Calu3 (cell line): ENCODE measurements at regions of chr3 and their contacts with region 1.

Region 1: GRCh38 chr3:161586556-161587235 is 90.1 kb downstream of the OTOL1 start:
- DNase-seq: no peak
- H3K4me3 Mint-ChIP-seq: no peak overlapping the region
- H3K27ac Mint-ChIP-seq: no peak overlapping the region
- H3K4me1 Mint-ChIP-seq: no peaks in the 10 kb centered on the region
- H3K27me3 Mint-ChIP-seq: no peaks in the 10 kb centered on the region
- CTCF ChIP-seq: no peak

Region 2: GRCh38 chr3:160911411-160911810 is 675.3 kb before region 1 on chr3:
- CTCF ChIA-PET with region 1: no interaction called
- intact Hi-C with region 1: no loop called
- DNase-seq: no peak
- H3K4me3 Mint-ChIP-seq: no peak overlapping the region
- H3K27ac Mint-ChIP-seq: no peak overlapping the region
- H3K4me1 Mint-ChIP-seq: no peaks in the 10 kb centered on the region
- H3K27me3 Mint-ChIP-seq: no peaks in the 10 kb centered on the region
- CTCF ChIP-seq: no peak

Region 3: DNA sequence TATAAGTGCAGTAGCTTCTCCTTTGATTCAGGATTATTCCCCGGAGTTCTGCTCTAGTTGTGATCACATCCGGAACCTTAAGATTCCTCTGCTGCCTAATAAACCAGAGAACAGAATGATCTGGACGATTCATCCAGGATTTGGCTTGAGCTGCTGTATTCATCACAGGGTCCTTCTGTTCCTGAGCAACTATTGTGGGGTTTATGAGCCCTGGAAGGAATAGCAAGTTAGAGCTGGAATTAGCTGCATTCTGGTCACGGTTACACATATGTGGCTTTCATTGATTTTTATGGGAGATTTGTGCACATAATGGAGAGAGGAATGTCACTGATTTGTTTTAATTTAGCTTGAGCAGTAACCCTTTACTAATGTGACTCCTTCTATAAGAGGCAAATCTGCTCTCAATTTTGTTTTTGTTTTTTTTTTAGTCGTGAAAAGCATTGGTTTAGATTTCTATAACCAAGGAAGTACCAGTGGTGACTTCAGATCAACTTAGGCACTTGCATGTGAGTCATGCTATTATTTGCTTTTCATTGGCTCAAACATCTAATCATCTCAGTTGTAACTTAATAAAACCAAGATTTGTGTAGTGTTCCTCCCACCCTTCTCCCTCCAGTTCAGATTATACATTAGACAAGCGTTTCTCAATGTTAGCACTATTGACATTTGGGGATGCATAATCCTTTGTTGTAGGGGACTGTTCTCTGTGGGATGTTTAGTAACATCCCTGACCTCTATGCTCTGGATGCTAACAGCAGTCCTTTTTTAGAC is 58.4 kb after region 1 on chr3:
- CTCF ChIA-PET with region 1: interaction called, 10 read pairs
- intact Hi-C with region 1: no loop called
- DNase-seq: no peak
- H3K4me3 Mint-ChIP-seq: no peak overlapping the region
- H3K27ac Mint-ChIP-seq: no peak overlapping the region
- H3K4me1 Mint-ChIP-seq: peaks cover 21% of the 10 kb centered on the region
- H3K27me3 Mint-ChIP-seq: no peaks in the 10 kb centered on the region
- CTCF ChIP-seq: no peak